HEK293T (cell line): ENCODE measurements at regions of chr16 and their contacts with region 1.

Region 1: DNA sequence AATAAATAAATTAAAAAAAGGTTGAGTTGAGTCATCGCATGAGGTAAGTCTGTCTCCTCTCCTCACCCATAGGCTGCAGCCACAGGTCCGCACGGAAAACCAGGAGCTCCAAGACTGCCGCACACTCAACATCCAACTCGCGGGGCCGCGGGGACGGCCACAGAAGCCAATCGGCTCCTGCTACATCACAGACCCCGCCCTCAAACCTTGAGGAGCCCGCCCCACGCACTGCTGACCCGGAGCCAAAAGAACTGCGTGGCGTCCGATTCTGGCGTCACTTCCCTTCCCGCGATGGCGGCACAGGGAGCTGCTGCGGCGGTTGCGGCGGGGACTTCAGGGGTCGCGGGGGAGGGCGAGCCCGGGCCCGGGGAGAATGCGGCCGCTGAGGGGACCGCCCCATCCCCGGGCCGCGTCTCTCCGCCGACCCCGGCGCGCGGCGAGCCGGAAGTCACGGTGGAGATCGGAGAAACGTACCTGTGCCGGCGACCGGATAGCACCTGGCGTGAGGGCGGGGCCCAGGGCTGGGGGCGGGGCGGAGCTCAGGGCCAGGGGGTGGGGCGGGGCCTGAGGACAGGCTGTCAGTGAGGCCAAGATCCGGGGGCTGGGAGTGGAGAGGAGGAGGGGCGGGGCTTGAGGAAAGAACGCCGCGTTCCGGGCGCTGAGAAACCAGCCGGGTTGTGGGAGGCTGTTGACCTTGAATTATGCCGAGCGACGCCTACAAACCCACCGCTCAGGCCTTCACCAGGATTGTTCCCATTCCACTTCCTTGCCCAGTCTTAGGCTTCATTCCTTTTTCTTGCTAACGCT is at the start of gene KAT8:
- DNase-seq: peak; percentile 95

Region 2: GRCh38 chr16:30615358-30616091 is 502.1 kb before region 1 on chr16:
- CTCF ChIA-PET with region 1: no interaction called
- POLR2A ChIA-PET with region 1: no interaction called
- DNase-seq: peak; percentile 83

Region 3: GRCh38 chr16:31010585-31011325 is 106.8 kb before region 1 on chr16 and contains the start of gene STX1B:
- CTCF ChIA-PET with region 1: no interaction called
- POLR2A ChIA-PET with region 1: no interaction called
- DNase-seq: peak; percentile 74

Region 4: GRCh38 chr16:31073968-31074813 is 43.4 kb before region 1 on chr16 and contains the starts of genes ZNF646 and ZNF668:
- CTCF ChIA-PET with region 1: no interaction called
- POLR2A ChIA-PET with region 1: interaction called, 21 read pairs
- DNase-seq: peak; percentile 92

Region 5: GRCh38 chr16:31099860-31100638 is 17.5 kb before region 1 on chr16:
- CTCF ChIA-PET with region 1: interaction called, 3 read pairs
- POLR2A ChIA-PET with region 1: interaction called, 13 read pairs
- DNase-seq: no peak

Region 6: DNA sequence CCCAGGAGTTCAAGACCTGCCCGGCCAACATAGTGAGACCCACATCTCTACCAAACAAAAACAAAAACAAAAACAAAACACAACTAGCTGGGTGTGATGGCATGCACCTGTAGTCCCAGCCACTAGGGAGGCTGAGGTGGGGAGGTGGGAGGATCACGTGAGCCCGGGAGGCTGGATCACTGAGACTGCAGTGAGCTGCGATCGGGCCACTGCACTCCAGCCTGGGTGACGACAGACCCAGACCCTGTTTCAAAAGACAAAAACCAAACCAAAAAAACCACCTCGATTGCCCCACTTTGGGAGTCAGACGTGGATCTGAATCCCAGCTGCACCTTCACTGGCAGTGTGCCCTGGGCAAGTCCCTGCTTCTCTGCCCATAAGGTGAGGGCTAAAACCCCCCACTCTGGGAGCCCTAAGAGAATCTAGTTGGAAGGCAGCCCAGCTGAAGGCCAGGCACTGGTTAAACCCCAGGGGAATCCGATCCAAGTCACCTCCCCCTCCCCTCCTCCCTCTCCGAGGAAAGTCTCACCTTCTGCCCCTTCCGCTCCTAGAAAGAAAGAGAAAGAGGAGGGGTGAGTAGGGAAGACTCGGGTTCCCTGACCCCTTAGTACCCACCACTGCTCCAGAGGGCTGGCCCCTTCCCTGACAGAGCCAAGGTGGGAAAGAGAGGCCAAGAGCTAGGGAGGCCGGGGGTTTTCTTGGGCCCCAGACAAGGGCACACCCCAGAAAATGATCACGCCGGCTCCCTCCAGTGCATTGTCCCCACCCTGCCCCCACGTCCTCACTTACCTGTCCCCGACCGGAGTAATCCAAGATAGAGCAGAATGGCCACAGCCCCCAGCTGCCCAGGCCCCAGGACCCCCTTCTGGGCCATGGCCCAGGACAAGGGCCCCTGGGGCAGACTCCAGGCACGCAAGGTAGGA is 17.3 kb after region 1 on chr16:
- CTCF ChIA-PET with region 1: interaction called, 3 read pairs
- POLR2A ChIA-PET with region 1: interaction called, 38 read pairs
- DNase-seq: no peak

Region 7: DNA sequence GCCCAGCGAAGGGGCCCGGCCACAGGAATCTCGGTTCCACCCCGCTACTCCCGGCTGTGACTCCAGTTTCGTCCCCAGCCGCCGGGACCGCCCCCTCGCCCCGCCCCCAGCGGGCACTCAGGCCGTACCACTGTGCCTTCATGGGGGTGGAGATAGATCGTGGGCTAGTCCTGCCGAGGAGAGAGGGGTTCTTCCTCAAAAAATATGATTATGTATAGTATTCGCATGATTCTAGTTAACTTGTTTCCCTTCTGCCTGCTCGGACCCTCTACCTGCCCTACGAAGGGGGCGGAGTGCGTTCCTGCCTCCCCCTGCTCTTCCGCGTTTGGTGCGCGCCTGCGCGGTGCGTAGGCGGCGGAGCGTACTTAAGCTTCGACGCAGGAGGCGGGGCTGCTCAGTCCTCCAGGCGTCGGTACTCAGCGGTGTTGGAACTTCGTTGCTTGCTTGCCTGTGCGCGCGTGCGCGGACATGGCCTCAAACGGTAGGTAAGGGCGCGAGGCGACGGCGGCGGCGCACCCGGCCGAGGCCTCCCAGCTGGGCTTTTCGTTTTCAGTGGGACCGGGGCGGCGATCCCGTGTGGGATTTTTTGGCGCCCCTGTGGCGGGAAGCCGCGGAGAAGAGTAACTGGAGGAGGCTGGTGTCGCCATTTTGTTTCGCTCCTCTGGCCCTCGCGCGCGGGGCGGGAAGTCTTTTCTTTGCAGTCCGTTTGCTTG is 62.3 kb after region 1 on chr16 and contains the start of gene FUS:
- CTCF ChIA-PET with region 1: no interaction called
- POLR2A ChIA-PET with region 1: interaction called, 20 read pairs
- DNase-seq: peak; percentile 94

Region 8: GRCh38 chr16:31202414-31203375 is 85.1 kb after region 1 on chr16 and contains the start of gene PYCARD:
- CTCF ChIA-PET with region 1: no interaction called
- POLR2A ChIA-PET with region 1: no interaction called
- DNase-seq: no peak

Region 9: DNA sequence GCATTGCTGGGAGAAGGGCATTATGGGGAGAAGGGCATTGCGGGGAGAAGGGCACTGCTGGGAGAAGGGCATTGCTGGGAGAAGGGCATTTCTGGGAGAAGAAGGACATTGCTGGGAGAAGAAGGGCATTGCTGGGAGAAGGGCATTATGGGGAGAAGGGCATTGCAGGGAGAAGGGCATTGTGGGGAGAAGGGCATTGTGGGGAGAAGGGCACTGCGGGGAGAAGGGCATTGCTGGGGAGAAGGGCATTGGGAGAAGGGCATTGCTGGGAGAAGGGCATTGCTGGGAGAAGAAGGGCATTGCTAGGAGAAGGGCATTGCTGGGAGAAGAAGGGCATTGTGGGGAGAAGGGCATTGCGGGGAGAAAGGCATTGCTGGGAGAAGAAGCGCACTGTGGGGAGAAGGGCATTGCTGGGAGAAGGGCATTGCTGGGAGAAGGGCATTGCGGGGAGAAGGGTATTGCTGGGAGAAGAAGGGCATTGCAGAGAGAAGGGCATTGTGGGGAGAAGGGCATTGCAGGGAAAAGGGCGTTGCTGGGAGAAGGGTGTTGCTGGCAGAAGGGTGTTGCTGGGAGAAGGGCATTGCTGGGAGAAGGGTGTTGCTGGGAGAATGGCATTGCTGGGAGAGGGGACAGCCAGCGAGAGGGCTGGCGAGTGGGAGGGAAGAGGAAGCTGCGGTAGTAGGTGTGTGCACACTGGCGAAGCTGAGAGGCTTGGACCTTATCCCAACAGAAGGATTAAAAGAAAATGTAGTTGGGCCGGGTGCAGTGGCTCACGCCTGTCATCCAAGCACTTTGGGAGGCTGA is 104.0 kb after region 1 on chr16:
- CTCF ChIA-PET with region 1: no interaction called
- POLR2A ChIA-PET with region 1: no interaction called
- DNase-seq: peak; percentile 3